HepG2 (cell line): ENCODE measurements at regions of chr16 and their contacts with region 1.

Region 1: GRCh38 chr16:49899991-49900695 is 44.2 kb upstream of the ZNF423 start:
- DNase-seq: no peak
- ATAC-seq: no peak
- H3K4me3 ChIP-seq: no peak overlapping the region
- H3K27ac ChIP-seq: no peak overlapping the region
- H3K4me1 ChIP-seq: no peaks in the 10 kb centered on the region
- H3K27me3 ChIP-seq: peaks cover 4 to 16% of the 10 kb centered on the region in 2 experiments; a peak in 3 of 5 replicates
- CTCF ChIP-seq: no peak
- EP300 ChIP-seq: no peak
- POLR2A ChIP-seq: no peak
- RAD21 ChIP-seq: no peak

Region 2: DNA sequence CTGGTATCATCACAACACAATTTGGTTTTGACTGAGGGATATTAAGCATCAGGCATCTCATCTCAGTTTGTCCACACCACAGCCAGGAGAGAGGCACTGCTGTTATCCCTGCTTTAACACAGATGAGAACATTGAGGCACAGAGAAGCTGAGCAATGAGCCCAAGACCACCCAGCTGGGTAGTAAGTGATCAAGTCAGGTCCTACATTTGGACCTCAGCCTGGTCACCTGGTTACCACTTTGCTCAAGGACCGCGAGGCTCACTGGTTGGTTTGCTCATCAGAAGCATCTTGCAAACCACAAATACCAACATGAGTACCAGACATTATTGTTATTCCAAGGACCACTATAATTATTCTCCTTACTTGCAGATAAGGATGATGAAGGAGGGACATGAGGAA is 864.0 kb before region 1 on chr16:
- CTCF ChIA-PET with region 1: no interaction called
- POLR2A ChIA-PET with region 1: no interaction called
- in situ Hi-C with region 1: no loop called
- intact Hi-C with region 1: loop called (anchors 10 kb)
- DNase-seq: no peak
- ATAC-seq: no peak
- H3K4me3 ChIP-seq: no peak overlapping the region
- H3K27ac ChIP-seq: no peak overlapping the region
- H3K4me1 ChIP-seq: no peaks in the 10 kb centered on the region
- H3K27me3 ChIP-seq: no peaks in the 10 kb centered on the region; a peak in 1 of 5 replicates
- CTCF ChIP-seq: no peak
- EP300 ChIP-seq: no peak
- POLR2A ChIP-seq: no peak
- RAD21 ChIP-seq: no peak